Activated CD4-positive, alpha-beta T cell treated with anti-CD3 and anti-CD28 coated beads, Interleukin-2, amount 10 ng/mL, durations not matched to agents 24 days and 14 days (primary cell): ENCODE measurements at regions of chr11 and their contacts with region 1.

Region 1: GRCh38 chr11:59680287-59681154 is 11.7 kb upstream of the PATL1 start:
- DNase-seq: peak; percentile 89
- H3K4me3 Mint-ChIP-seq: no peak overlapping the region
- H3K27ac Mint-ChIP-seq: no peak overlapping the region
- H3K4me1 Mint-ChIP-seq: peaks cover 5% of the 10 kb centered on the region
- H3K27me3 Mint-ChIP-seq: peaks cover 17% of the 10 kb centered on the region

Region 2: GRCh38 chr11:59542142-59542810 is 138.2 kb before region 1 on chr11:
- intact Hi-C with region 1: loop called (anchors 1 kb)
- DNase-seq: no peak
- H3K4me3 Mint-ChIP-seq: no peak overlapping the region
- H3K27ac Mint-ChIP-seq: no peak overlapping the region
- H3K4me1 Mint-ChIP-seq: peaks cover 7% of the 10 kb centered on the region
- H3K27me3 Mint-ChIP-seq: peaks cover 3% of the 10 kb centered on the region

Region 3: GRCh38 chr11:59666969-59667368 is 13.6 kb before region 1 on chr11:
- intact Hi-C with region 1: no loop called
- DNase-seq: no peak
- H3K4me3 Mint-ChIP-seq: peak overlapping the region; percentile 98
- H3K27ac Mint-ChIP-seq: peak overlapping the region; percentile 96
- H3K4me1 Mint-ChIP-seq: peaks cover 48% of the 10 kb centered on the region
- H3K27me3 Mint-ChIP-seq: peaks cover 1% of the 10 kb centered on the region

Region 4: DNA sequence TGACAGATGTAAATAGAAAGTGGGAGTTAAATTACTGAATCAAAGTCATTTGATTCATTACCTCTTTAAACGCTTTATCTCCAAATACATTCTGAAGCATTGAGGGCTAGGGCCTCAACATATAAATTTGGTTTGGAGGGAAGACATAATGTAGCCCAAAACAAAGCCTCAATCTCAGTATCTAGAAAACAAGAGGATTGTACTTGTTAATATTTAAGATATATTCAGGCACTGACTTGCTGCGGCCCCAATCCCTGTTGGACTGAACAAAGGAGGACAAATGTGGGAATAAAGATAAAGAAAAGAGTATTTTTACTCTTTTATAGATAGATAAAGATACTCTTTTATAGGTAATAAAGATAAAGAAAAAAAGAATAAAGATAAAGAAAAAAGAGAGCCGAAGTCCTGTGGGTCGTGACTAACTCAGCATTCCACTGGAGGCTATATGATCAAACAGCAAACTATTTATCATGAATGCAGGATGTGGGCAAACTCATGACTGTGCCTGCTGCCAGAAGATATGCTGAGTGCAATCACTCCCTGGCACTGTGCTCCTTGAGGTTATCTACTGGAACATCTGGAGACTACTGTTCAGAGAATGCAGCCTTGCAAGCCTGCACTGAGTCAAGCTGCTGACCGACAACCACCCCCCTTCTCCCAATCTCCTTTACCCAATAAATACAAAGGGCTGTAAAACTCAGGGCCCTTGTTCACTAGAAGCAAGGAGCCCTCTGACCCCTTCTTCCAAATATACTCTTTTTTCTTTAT is 26.2 kb after region 1 on chr11:
- intact Hi-C with region 1: no loop called
- DNase-seq: peak; percentile 30
- H3K4me3 Mint-ChIP-seq: no peak overlapping the region
- H3K27ac Mint-ChIP-seq: no peak overlapping the region
- H3K4me1 Mint-ChIP-seq: no peaks in the 10 kb centered on the region
- H3K27me3 Mint-ChIP-seq: peaks cover 7% of the 10 kb centered on the region

Region 5: GRCh38 chr11:59866397-59866796 is 185.9 kb after region 1 on chr11 and contains the start of gene TCN1:
- intact Hi-C with region 1: no loop called
- DNase-seq: no peak
- H3K4me3 Mint-ChIP-seq: no peak within 1 kb of the TSS
- H3K27ac Mint-ChIP-seq: no peak within 1 kb of the TSS
- H3K4me1 Mint-ChIP-seq: no peaks in the 10 kb centered on the region
- H3K27me3 Mint-ChIP-seq: peaks cover 9% of the 10 kb centered on the region
- total RNA-seq, gene TCN1: not detected in 2 replicates